ENCODE measurements at regions of chr1 and their contacts with region 1.

Region 1: GRCh38 chr1:183685112-183685713 is 32.1 kb upstream of the APOBEC4 start:
- DNase-seq: peak; percentile 17 to 51
- H3K4me3 ChIP-seq: no peak overlapping the region
- H3K27ac ChIP-seq: no peak overlapping the region
- H3K4me1 ChIP-seq: peaks cover 8% of the 10 kb centered on the region; the same call in 1 of the 2 replicates
- H3K27me3 ChIP-seq: no peaks in the 10 kb centered on the region
- CTCF ChIP-seq: peak; percentile 88

Region 2: DNA sequence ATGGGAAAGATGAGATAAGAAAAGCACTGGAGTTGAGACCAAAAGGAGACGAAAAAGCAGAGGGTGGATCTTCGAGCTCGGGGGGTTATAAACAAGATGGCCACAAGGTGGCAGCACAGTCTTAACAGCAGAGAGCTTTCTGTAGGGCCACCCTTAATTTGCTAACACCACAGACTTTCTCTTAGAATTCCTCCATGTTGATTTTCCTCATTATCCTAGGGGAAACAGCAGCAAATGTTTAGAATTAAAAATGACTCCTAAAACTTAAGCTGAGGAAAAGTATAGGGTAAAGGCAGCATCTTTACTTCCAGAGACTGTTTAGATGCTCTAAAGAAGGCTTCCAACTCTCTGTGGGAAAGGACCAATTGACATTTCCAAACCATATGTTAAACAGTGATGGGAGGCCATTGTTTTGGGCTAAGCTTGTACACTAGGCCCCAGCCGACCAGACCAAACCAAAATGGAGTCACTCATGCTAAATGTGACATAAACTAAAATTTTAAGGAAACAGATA is 29.6 kb before region 1 on chr1:
- CTCF ChIA-PET with region 1: interaction called, 13 read pairs
- POLR2A ChIA-PET with region 1: no interaction called
- intact Hi-C with region 1: loop called (anchors 1 kb)
- DNase-seq: peak; percentile 54 to 68
- H3K4me3 ChIP-seq: no peak overlapping the region
- H3K27ac ChIP-seq: no peak overlapping the region
- H3K4me1 ChIP-seq: no peaks in the 10 kb centered on the region
- H3K27me3 ChIP-seq: no peaks in the 10 kb centered on the region
- CTCF ChIP-seq: peak; percentile 94

Measured in PC-9 (cell line).